ENCODE measurements at regions of chr1 and their contacts with region 1.

Region 1: DNA sequence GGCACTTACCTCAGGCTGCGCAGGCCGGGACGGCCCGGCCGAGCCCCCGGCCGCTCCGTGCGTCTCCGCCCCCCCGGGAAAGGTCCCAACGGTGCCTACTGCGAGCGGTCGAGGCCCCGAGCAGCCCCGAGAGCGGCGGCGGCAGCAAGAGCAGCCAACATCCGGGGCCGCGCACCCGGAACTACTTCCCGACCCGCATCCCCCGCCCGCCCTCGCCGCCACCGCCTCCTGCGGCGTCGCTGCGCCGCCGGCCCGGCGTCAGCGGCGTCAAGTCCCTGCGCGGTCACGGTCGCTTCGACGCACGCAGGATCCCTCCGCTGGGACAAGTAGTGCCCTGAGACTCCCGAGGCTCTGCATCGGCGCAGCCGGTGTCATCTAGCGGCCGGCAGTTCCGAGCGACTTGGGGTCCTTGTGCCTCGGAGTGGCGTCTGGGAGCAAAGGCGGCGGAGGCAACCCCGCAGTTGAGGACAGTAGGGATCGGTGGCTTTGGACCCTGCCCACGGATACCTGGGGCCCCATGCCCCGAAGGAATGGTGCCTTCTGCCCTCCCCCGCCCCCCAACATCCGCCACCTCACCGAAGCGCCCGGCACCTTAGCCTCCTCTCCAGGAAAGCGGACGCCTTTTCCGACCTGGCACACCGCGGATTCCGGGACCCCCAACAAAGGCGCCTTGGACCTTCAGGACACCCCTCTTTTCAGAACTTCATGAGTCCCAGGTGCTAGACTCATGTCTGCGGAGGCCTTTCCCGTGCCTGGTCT is at the start of gene FOXJ3:
- DNase-seq: peak; percentile 91
- H3K4me3 ChIP-seq: peak within 1 kb of the TSS; percentile 79 to 88 (median 82)
- H3K27ac ChIP-seq: peak within 1 kb of the TSS; percentile 68
- H3K4me1 ChIP-seq: peaks cover 16% of the 10 kb centered on the region
- H3K27me3 ChIP-seq: no peaks in the 10 kb centered on the region
- CTCF ChIP-seq: no peak
- POLR2A ChIP-seq: peak; percentile 95
- total RNA-seq, gene FOXJ3: 36.5 and 38.8 TPM in 2 replicates

Region 2: DNA sequence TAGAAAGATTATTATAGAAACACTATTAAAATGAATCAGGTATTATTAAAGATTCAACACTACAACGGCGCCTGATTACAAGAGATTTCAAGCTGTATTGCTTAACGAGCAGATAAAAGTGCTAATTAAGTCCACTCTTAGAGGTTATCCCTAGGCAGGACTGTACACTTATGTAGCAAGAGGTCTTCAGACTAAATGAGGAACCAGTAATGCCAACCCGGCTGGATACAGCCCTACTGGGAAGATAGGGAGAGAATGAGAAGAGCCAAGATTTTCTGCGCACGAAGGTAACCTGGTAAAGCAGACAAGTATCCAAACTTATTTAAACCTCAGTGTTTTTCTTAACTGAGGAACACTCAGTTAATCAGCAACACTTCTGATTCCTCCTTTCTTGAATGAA is 300.8 kb before region 1 on chr1:
- CTCF ChIA-PET with region 1: no interaction called
- POLR2A ChIA-PET with region 1: no interaction called
- dilution Hi-C with region 1: no loop called
- intact Hi-C with region 1: no loop called
- DNase-seq: peak; percentile 7
- H3K4me3 ChIP-seq: no peak overlapping the region
- H3K27ac ChIP-seq: no peak overlapping the region
- H3K4me1 ChIP-seq: peaks cover 13% of the 10 kb centered on the region
- H3K27me3 ChIP-seq: peaks cover 4 to 6% of the 10 kb centered on the region in 2 experiments
- CTCF ChIP-seq: no peak
- POLR2A ChIP-seq: no peak

Region 3: DNA sequence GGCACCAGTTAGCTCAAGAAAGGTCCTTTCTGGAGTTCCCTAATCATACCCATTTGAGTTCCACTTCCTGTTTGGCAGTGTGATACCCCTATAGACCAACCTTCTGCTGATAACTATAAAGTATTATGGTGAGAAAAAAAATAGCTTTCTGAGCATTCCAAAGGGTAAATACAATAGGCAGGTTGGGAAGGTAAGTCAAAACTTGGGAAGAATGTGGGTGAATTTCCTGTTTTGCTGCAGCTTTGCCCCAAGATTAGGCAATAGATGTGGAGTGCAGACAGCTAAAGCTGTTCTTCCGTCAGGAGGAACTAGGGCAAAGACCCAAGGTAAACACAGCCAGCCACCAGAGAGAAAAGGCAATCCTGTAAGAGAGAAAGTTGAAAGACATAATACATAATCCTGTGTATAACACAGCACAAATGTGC is 120.8 kb before region 1 on chr1:
- CTCF ChIA-PET with region 1: interaction called, 3 read pairs
- POLR2A ChIA-PET with region 1: no interaction called
- dilution Hi-C with region 1: no loop called
- intact Hi-C with region 1: loop called (anchors 10 kb)
- DNase-seq: peak; percentile 88
- H3K4me3 ChIP-seq: peak overlapping the region in 1 of 3 experiments; percentile 10
- H3K27ac ChIP-seq: peak overlapping the region; percentile 16
- H3K4me1 ChIP-seq: peaks cover 44% of the 10 kb centered on the region
- H3K27me3 ChIP-seq: no peaks in the 10 kb centered on the region
- CTCF ChIP-seq: no peak
- POLR2A ChIP-seq: no peak

Region 4: GRCh38 chr1:42264511-42265190 is 70.6 kb before region 1 on chr1:
- CTCF ChIA-PET with region 1: no interaction called
- POLR2A ChIA-PET with region 1: interaction called, 12 read pairs
- dilution Hi-C with region 1: no loop called
- intact Hi-C with region 1: no loop called
- DNase-seq: no peak
- H3K4me3 ChIP-seq: no peak overlapping the region
- H3K27ac ChIP-seq: no peak overlapping the region
- H3K4me1 ChIP-seq: no peaks in the 10 kb centered on the region
- H3K27me3 ChIP-seq: no peaks in the 10 kb centered on the region
- CTCF ChIP-seq: no peak
- POLR2A ChIP-seq: no peak

Region 5: DNA sequence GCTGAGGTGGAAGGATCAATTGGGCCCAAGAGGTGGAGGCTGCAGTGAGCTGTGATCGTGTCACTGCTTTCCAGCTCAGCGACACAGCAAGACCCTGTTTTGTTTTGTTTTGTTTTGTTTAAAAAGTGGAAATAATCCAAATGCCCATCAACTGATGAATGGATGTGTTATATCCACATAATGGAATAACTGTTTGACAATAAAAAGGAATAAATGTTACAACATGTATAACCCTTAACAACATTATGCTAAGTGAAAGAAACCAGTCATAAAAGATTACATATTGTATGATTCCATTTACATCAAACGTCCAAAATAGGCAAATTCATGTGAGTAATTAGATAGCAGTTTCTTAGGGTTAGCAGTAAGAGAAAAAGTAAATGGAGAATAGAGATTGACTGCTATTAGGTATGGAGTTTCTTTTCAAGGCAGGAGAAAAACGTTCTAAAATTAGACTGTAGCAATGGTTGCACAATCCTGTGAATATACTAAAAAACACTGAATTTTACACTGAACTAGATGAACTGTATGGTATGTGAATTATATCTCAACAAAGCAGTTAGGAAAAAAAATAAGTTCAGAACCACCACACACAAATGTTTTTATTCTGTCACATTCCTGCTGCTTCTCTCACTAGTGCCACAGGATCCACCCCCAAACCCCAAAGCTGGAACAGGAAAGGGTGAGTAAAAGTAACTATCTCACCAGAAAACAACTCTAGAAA is 15.9 kb before region 1 on chr1:
- CTCF ChIA-PET with region 1: interaction called, 10 read pairs
- POLR2A ChIA-PET with region 1: no interaction called
- dilution Hi-C with region 1: no loop called
- intact Hi-C with region 1: loop called (anchors 2 kb)
- DNase-seq: peak; percentile 43
- H3K4me3 ChIP-seq: peak overlapping the region in 1 of 3 experiments; percentile 51
- H3K27ac ChIP-seq: peak overlapping the region; percentile 35
- H3K4me1 ChIP-seq: peaks cover 46% of the 10 kb centered on the region
- H3K27me3 ChIP-seq: no peaks in the 10 kb centered on the region
- CTCF ChIP-seq: no peak
- POLR2A ChIP-seq: no peak

Region 6: GRCh38 chr1:42462828-42463763 is 127.9 kb after region 1 on chr1 and contains the start of gene CCDC30:
- CTCF ChIA-PET with region 1: no interaction called
- POLR2A ChIA-PET with region 1: no interaction called
- dilution Hi-C with region 1: no loop called
- intact Hi-C with region 1: loop called (anchors 2 kb)
- DNase-seq: peak; percentile 99
- H3K4me3 ChIP-seq: peak within 1 kb of the TSS; percentile 57 to 79 (median 67)
- H3K27ac ChIP-seq: peak within 1 kb of the TSS; percentile 24
- H3K4me1 ChIP-seq: peaks cover 7% of the 10 kb centered on the region
- H3K27me3 ChIP-seq: peaks cover under 1 to 3% of the 10 kb centered on the region in 2 experiments
- CTCF ChIP-seq: no peak
- POLR2A ChIP-seq: no peak
- total RNA-seq, gene CCDC30: 1.5 and 2.9 TPM in 2 replicates

Region 7: GRCh38 chr1:42657971-42658879 is 323.0 kb after region 1 on chr1 and contains the start of gene PPIH:
- CTCF ChIA-PET with region 1: no interaction called
- POLR2A ChIA-PET with region 1: no interaction called
- dilution Hi-C with region 1: no loop called
- intact Hi-C with region 1: loop called (anchors 5 kb)
- DNase-seq: peak; percentile 93
- H3K4me3 ChIP-seq: peak within 1 kb of the TSS; percentile 55 to 86 (median 72)
- H3K27ac ChIP-seq: peak within 1 kb of the TSS; percentile 14
- H3K4me1 ChIP-seq: peaks cover 14% of the 10 kb centered on the region
- H3K27me3 ChIP-seq: peaks cover 7 to 8% of the 10 kb centered on the region in 2 experiments
- CTCF ChIP-seq: no peak
- POLR2A ChIP-seq: peak; percentile 94
- total RNA-seq, gene PPIH: 49.3 and 52.1 TPM in 2 replicates

Region 8: GRCh38 chr1:42681741-42682483 is 346.7 kb after region 1 on chr1 and contains the start of gene YBX1:
- CTCF ChIA-PET with region 1: no interaction called
- POLR2A ChIA-PET with region 1: no interaction called
- dilution Hi-C with region 1: no loop called
- intact Hi-C with region 1: loop called (anchors 10 kb)
- DNase-seq: peak; percentile 99
- H3K4me3 ChIP-seq: peak within 1 kb of the TSS; percentile 76 to 99 (median 95)
- H3K27ac ChIP-seq: peak within 1 kb of the TSS; percentile 72
- H3K4me1 ChIP-seq: peaks cover 41% of the 10 kb centered on the region
- H3K27me3 ChIP-seq: no peaks in the 10 kb centered on the region
- CTCF ChIP-seq: no peak
- POLR2A ChIP-seq: peak; percentile 86
- total RNA-seq, gene YBX1: 783 and 829 TPM in 2 replicates